A673 (cell line): ENCODE measurements at regions of chr19 and their contacts with region 1.

Region 1: DNA sequence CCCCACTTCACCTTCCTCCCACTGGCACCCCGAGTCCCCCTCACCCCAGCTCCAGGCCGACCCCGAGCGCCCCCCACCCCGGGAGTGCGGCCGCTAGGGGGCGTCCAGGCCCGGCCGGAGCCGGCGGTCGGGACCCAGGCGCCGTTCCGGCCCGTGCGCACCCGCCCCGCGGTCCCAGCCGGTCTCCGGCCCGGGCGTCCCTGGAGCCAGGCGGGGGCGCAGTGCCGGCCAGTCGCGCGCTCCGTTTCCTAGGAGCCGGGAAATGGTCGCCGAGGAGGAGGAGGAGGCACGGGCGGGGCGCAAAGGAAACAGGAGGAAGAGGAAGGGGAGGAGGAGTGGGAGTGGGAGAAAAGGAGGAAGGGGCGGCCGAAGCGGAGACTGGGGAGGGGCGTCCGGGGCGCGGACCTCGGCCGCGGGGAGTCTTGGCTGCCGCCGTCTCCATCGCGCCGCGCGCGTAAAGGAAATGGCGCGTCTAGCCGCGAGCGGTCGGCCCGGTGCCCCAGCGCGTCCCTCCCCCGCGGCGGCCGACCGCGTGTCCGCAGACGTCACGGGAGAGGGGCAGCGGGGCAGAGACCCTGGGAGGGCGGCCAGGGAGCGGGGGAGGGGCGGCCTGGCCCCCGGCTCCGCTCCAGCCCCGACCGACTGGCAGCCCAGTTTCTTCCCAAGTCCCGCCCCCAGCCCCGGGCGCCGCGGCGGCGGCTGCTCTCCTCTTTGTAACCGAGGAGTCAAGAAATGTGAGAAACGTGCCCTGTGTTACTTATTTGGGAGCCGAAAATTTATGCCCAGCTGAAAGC is 1.1 kb upstream of the KCTD15 start:
- DNase-seq: peak; percentile 80
- H3K4me3 ChIP-seq: peak overlapping the region; percentile 71
- H3K27ac ChIP-seq: peak overlapping the region; percentile 84
- H3K4me1 ChIP-seq: peaks cover 9% of the 10 kb centered on the region
- H3K27me3 ChIP-seq: peaks cover 28% of the 10 kb centered on the region
- CTCF ChIP-seq: peak; percentile 83

Region 2: GRCh38 chr19:33384983-33385382 is 410.6 kb before region 1 on chr19:
- CTCF ChIA-PET with region 1: no interaction called
- POLR2A ChIA-PET with region 1: interaction called, 14 read pairs
- intact Hi-C with region 1: no loop called
- DNase-seq: no peak
- H3K4me3 ChIP-seq: no peak overlapping the region
- H3K27ac ChIP-seq: no peak overlapping the region
- H3K4me1 ChIP-seq: peaks cover 13% of the 10 kb centered on the region
- H3K27me3 ChIP-seq: no peaks in the 10 kb centered on the region
- CTCF ChIP-seq: no peak

Region 3: DNA sequence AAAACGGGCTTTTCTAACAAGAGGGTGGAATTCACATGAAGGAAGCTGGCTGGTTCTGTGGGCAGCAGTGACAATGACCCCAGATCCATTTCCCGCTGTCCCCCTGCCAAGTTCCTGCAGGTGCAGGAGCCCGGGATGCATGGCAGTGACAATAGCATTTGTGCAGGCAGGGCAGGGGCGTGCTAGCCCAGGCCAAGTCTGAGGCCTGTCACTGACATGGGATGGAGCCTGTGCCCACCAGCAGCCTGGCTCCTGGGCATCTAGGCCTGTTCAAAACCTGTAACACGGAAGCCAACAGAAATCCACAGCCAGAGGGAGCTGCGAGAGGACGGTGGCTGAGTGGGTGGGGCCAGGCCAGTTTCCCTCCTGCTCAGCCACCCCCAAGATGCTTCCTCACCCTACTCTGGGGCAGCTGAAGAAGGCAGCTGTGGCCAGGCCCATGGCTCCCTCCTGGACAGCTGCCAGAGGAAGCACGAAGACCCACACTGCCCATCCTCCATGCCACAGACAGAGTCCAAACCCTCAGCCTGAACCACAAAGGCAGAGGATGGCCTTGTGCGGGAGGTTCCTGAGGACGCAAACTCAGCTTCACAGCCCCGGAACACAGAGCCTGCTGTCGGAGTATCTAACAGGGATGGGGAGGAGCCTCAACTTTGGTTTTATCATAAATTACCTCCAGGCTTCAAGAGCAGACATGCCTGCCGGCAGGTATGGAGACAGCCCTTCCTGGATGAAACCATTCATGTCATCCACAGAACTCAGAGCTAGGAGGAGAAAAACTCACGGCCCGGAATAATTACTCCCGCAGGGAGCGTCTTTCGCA is 348.0 kb before region 1 on chr19:
- CTCF ChIA-PET with region 1: no interaction called
- POLR2A ChIA-PET with region 1: no interaction called
- intact Hi-C with region 1: no loop called
- DNase-seq: no peak
- H3K4me3 ChIP-seq: no peak overlapping the region
- H3K27ac ChIP-seq: no peak overlapping the region
- H3K4me1 ChIP-seq: no peaks in the 10 kb centered on the region
- H3K27me3 ChIP-seq: no peaks in the 10 kb centered on the region
- CTCF ChIP-seq: no peak

Region 4: GRCh38 chr19:33545217-33545981 is 250.2 kb before region 1 on chr19:
- CTCF ChIA-PET with region 1: interaction called, 11 read pairs
- POLR2A ChIA-PET with region 1: no interaction called
- intact Hi-C with region 1: no loop called
- DNase-seq: no peak
- H3K4me3 ChIP-seq: no peak overlapping the region
- H3K27ac ChIP-seq: no peak overlapping the region
- H3K4me1 ChIP-seq: no peaks in the 10 kb centered on the region
- H3K27me3 ChIP-seq: peaks cover 4% of the 10 kb centered on the region
- CTCF ChIP-seq: no peak

Region 5: GRCh38 chr19:33771384-33772101 is 24.0 kb before region 1 on chr19:
- CTCF ChIA-PET with region 1: no interaction called
- POLR2A ChIA-PET with region 1: no interaction called
- intact Hi-C with region 1: no loop called
- DNase-seq: peak; percentile 77
- H3K4me3 ChIP-seq: no peak overlapping the region
- H3K27ac ChIP-seq: no peak overlapping the region
- H3K4me1 ChIP-seq: no peaks in the 10 kb centered on the region
- H3K27me3 ChIP-seq: no peaks in the 10 kb centered on the region
- CTCF ChIP-seq: peak; percentile 87

Region 6: GRCh38 chr19:33823341-33823740 is 27.8 kb after region 1 on chr19:
- CTCF ChIA-PET with region 1: no interaction called
- POLR2A ChIA-PET with region 1: interaction called, 16 read pairs
- intact Hi-C with region 1: no loop called
- DNase-seq: no peak
- H3K4me3 ChIP-seq: no peak overlapping the region
- H3K27ac ChIP-seq: no peak overlapping the region
- H3K4me1 ChIP-seq: peaks cover 5% of the 10 kb centered on the region
- H3K27me3 ChIP-seq: no peaks in the 10 kb centered on the region
- CTCF ChIP-seq: no peak